MCF 10A (cell line): ENCODE measurements at regions of chr3 and their contacts with region 1.

Region 1: GRCh38 chr3:87305517-87305916 is 29.1 kb upstream of the POU1F1 start:
- DNase-seq: no peak
- H3K4me3 Mint-ChIP-seq: no peak overlapping the region
- H3K27ac Mint-ChIP-seq: no peak overlapping the region
- H3K4me1 Mint-ChIP-seq: peaks cover 6% of the 10 kb centered on the region
- H3K27me3 Mint-ChIP-seq: no peaks in the 10 kb centered on the region
- CTCF ChIP-seq: no peak

Region 2: GRCh38 chr3:87317779-87318178 is 12.3 kb after region 1 on chr3:
- CTCF ChIA-PET with region 1: no interaction called
- POLR2A ChIA-PET with region 1: no interaction called
- intact Hi-C with region 1: no loop called
- DNase-seq: no peak
- H3K4me3 Mint-ChIP-seq: no peak overlapping the region
- H3K27ac Mint-ChIP-seq: no peak overlapping the region
- H3K4me1 Mint-ChIP-seq: peaks cover 9% of the 10 kb centered on the region
- H3K27me3 Mint-ChIP-seq: no peaks in the 10 kb centered on the region
- CTCF ChIP-seq: no peak

Region 3: GRCh38 chr3:87503900-87504508 is 198.5 kb after region 1 on chr3:
- CTCF ChIA-PET with region 1: interaction called, 22 read pairs
- POLR2A ChIA-PET with region 1: no interaction called
- intact Hi-C with region 1: no loop called
- DNase-seq: peak; percentile 81
- H3K4me3 Mint-ChIP-seq: no peak overlapping the region
- H3K27ac Mint-ChIP-seq: no peak overlapping the region
- H3K4me1 Mint-ChIP-seq: no peaks in the 10 kb centered on the region
- H3K27me3 Mint-ChIP-seq: no peaks in the 10 kb centered on the region
- CTCF ChIP-seq: peak; percentile 70